ENCODE measurements at regions of chr12 and their contacts with region 1.

Region 1: GRCh38 chr12:117501076-117501869 is 139.8 kb upstream of the NOS1 start:
- DNase-seq: peak; percentile 66
- ATAC-seq: peak; percentile 93

Region 2: DNA sequence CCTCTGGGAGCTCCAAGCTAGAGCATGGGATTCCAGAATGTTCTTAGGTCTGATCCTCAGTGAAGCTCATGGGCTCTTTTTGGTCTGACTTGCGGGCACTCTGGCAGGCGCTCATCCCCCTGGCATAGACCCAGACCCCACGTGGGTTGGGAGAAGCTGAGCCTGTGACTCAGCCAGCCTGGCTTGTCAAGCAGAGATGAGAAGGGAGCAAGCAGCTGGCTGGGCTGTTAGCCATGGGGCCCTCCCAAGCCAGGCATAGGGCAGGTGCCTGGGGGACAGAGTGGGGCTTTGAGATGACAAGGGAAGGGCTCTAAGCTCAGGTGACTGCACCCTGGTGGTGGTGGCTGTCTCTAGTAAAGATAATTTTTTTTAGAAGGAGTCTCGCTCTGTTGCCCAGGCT is 59.5 kb before region 1 on chr12:
- intact Hi-C with region 1: loop called (anchors 5 kb)
- DNase-seq: no peak
- ATAC-seq: peak; percentile 55

Region 3: DNA sequence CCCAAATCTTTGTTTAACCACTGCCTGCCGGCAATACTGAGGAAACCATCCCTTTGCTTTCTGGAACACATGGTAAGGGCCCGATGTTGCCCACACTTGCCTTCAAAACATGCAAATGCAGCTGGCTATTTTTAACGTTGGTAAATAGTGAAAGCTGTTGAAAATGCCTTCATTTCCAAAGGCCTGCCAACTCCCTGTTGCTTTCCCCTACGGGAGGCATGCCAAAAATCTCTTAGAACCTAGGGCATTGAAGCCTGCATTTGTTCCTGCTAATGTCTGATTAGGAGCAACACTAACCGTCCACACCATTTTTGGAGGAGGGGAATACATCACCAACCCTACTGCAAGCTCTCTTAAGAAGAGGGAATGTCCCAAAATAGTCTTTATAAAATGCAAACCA is 12.7 kb after region 1 on chr12:
- intact Hi-C with region 1: loop called (anchors 2 kb)
- DNase-seq: no peak
- ATAC-seq: peak; percentile 69